ENCODE measurements at regions of chr9 and their contacts with region 1.

Region 1: GRCh38 chr9:35646533-35647265 is 4.0 kb downstream of the SIT1 start:
- DNase-seq: peak; percentile 94
- H3K4me3 Mint-ChIP-seq: peak overlapping the region; percentile 92
- H3K27ac Mint-ChIP-seq: peak overlapping the region; percentile 94
- H3K4me1 Mint-ChIP-seq: peaks cover 64% of the 10 kb centered on the region
- H3K27me3 Mint-ChIP-seq: no peaks in the 10 kb centered on the region

Region 2: DNA sequence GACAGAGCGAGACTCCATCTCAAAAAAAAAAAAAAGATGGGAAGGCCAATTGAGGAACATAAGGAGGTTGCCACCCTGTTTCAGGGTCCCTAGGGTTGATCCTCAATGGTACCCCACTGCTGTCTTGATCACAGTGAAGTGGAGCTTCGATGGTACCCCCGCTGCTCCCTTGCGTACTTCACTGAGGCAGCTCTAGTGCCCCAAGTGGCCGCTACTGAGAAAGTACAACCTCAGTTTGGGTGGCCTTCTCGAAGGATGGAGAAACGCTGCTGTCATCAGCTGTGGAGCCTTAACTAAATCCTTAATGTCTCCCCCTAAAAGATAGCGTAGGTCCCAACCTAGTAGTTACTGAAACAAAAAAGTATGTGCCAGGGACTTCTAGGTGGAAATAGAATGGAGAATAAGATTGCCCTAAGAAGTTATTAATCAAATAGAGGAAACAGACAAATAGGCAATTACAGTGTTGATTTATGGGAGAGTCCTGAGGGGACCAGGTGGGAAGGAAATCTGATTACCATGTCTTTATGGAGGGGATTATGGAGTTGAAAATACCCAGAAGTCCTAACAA is 35.4 kb before region 1 on chr9:
- CTCF ChIA-PET with region 1: interaction called, 92 read pairs
- POLR2A ChIA-PET with region 1: interaction called, 9 read pairs
- DNase-seq: peak; percentile 61
- H3K4me3 Mint-ChIP-seq: no peak overlapping the region
- H3K27ac Mint-ChIP-seq: no peak overlapping the region
- H3K4me1 Mint-ChIP-seq: peaks cover 23% of the 10 kb centered on the region
- H3K27me3 Mint-ChIP-seq: peaks cover 11% of the 10 kb centered on the region

Region 3: DNA sequence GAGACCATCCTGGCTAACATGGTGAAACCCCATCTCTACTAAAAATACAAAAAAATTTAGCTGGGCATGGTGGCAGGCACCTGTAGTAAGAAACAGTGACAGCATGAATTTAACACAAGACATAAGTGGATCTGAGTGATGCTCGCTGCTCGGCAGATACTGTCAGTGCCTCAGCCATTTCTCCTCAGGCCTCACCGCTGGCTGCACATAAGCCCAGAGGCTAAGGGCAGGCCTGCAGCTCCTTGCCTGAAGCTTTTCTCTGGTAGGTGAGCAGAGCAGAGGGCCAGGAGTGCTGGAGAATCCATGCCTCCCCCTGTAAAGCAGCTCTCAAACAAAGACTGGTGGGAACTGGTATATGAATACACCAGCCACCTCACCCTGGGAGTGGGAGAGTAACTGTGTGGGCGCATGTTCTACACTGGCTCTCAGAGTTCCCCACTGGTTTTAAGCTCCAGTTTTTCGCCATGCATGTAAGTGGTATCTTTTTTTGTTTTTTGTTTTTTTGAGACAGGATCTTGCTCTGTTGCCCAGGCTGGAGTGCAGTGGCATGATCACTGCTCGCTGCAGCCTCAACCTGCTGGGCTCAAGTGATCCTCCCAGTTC is 18.2 kb before region 1 on chr9:
- CTCF ChIA-PET with region 1: interaction called, 30 read pairs
- POLR2A ChIA-PET with region 1: no interaction called
- DNase-seq: no peak
- H3K4me3 Mint-ChIP-seq: no peak overlapping the region
- H3K27ac Mint-ChIP-seq: no peak overlapping the region
- H3K4me1 Mint-ChIP-seq: no peaks in the 10 kb centered on the region
- H3K27me3 Mint-ChIP-seq: no peaks in the 10 kb centered on the region

Region 4: DNA sequence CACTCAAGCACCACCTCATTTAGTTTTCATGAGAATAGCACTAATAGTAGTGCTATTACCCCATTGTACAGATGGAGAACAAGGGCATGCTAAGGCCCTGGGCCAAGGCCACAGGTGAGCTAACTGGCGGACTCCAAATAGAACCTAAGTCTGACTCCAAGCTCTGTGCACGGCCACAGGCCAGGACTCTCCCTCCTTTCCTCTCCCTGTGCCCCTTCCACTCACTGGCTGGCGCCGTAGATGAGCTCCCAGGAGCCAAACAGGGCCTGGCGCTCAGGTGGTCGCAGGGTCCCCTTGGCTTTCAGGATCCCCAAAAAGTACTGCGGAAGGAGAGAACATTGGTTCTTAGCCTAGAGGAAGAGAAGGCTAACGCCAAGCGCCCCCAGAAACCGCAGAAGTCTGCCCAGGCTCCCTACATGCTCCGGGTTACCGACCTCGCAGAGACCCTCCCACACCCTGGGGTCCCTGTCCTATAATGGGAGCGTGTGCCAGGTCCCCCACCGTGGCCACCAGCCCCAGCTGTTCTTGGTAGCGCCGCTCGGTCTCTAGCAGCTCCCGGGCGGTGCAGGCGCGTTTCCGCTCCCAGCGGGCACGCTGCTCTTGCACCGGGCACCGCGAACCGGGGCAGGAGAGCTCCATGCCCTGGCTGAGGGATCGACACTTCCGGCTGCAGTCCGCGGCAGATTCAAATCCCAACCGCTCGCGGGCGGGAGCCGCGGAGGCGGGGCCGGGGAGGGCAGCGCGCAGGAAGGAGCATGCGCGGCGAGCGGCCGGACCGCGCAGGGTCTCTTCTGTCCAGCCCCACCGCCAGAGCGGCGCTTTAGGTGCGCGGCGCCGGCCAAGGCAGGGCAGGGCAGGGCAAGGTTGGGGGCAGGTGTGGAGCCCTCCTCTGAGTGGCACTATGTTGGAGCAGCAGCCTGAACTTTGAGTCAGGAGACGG is 18.1 kb after region 1 on chr9 and contains the start of gene ARHGEF39:
- CTCF ChIA-PET with region 1: interaction called, 74 read pairs
- POLR2A ChIA-PET with region 1: interaction called, 4 read pairs
- DNase-seq: peak; percentile 76
- H3K4me3 Mint-ChIP-seq: peak within 1 kb of the TSS; percentile 85
- H3K27ac Mint-ChIP-seq: peak within 1 kb of the TSS; percentile 88
- H3K4me1 Mint-ChIP-seq: peaks cover 64% of the 10 kb centered on the region
- H3K27me3 Mint-ChIP-seq: no peaks in the 10 kb centered on the region
- total RNA-seq, gene ARHGEF39: 11.8 to 13.5 TPM

Region 5: DNA sequence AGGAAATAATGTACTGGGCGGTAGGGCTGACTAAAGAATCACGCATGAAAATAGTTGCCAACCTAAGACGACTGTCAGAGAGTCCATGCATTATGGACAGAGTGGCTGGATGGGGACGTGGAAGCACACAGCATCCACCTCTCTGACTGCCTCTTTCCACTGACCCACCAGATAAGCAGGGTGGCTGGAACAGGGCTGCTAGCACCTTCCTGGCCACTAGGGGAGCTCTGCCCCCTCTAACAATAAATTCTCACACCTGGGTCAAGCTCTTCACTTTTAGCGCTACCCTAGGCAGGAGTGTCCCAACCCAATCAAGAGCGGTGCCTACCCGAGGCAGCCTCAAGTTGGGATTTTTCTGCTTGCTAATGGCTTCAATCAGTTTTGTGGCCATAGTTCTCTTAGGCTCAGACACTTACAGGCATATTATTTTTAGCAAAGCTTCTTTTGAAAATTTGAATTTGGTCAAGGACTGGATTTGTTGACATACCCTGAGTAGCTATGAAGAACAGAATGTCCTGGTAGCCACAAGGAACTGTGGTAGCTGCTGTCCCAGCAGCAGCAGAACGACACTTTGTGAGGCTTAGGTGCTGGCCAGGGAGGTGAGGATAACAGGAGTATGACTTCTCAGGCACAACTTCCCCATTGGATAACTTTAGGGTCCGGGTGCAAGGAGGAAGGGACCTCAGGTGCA is 50.0 kb after region 1 on chr9:
- CTCF ChIA-PET with region 1: interaction called, 14 read pairs
- POLR2A ChIA-PET with region 1: no interaction called
- DNase-seq: peak; percentile 55
- H3K4me3 Mint-ChIP-seq: no peak overlapping the region
- H3K27ac Mint-ChIP-seq: no peak overlapping the region
- H3K4me1 Mint-ChIP-seq: peaks cover 9% of the 10 kb centered on the region
- H3K27me3 Mint-ChIP-seq: no peaks in the 10 kb centered on the region